ENCODE measurements at regions of chrX and their contacts with region 1.

Region 1: GRCh38 chrX:23742697-23743622 is at the start of gene ACOT9:
- DNase-seq: peak; percentile 90 to 94
- H3K4me3 ChIP-seq: peak within 1 kb of the TSS; percentile 89
- H3K4me3 Mint-ChIP-seq: peak within 1 kb of the TSS; percentile 80
- H3K27ac Mint-ChIP-seq: peak within 1 kb of the TSS; percentile 92
- H3K4me1 ChIP-seq: no peaks in the 10 kb centered on the region
- H3K4me1 Mint-ChIP-seq: peaks cover 6% of the 10 kb centered on the region
- H3K27me3 ChIP-seq: no peaks in the 10 kb centered on the region
- H3K27me3 Mint-ChIP-seq: no peaks in the 10 kb centered on the region
- CTCF ChIP-seq: no peak
- total RNA-seq, gene ACOT9: 35.1 and 40.9 TPM in 2 replicates

Region 2: DNA sequence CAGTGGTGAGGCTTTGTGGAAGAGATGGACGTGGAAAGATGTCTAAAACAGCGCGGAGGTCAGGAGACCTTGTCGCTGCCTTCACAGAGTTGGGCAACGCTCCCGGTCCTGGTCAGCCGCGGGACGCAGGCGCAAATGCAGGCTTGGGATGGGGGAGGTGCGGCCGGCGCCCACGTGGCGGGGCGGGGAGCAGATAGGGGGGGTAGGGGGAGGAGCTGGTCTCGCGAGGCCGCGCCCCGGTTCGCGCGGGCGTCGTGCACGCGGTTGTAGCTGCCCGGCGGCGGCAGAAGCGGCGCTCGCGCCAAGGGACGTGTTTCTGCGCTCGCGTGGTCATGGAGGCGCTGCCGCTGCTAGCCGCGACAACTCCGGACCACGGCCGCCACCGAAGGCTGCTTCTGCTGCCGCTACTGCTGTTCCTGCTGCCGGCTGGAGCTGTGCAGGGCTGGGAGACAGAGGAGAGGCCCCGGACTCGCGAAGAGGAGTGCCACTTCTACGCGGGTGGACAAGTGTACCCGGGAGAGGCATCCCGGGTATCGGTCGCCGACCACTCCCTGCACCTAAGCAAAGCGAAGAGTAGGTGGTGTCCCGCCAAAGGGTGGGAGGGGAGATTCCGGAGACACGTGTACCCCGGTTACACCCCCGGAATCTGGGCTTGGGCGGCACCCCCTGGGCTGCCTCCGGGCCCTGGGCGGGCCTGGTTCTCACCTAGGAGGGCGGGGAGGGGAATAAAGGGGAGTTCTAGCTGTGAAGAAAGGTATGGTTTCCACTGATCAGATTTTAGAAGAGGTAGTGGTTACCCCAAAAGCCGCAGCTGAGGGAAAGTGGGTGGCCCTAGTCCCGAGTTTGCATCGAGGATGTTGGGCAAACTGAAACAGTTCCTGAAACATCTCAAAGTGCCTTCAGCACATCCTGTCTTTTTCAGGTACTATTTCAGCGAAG is 75.5 kb before region 1 on chrX and contains the start of gene PRDX4:
- CTCF ChIA-PET with region 1: no interaction called
- POLR2A ChIA-PET with region 1: no interaction called
- intact Hi-C with region 1: loop called (anchors 2 kb)
- DNase-seq: peak; percentile 90
- H3K4me3 ChIP-seq: peak within 1 kb of the TSS; percentile 62
- H3K4me3 Mint-ChIP-seq: peak within 1 kb of the TSS; percentile 75
- H3K27ac Mint-ChIP-seq: peak within 1 kb of the TSS; percentile 73
- H3K4me1 ChIP-seq: peaks cover 5% of the 10 kb centered on the region
- H3K4me1 Mint-ChIP-seq: peaks cover 7% of the 10 kb centered on the region
- H3K27me3 ChIP-seq: no peaks in the 10 kb centered on the region
- H3K27me3 Mint-ChIP-seq: no peaks in the 10 kb centered on the region
- CTCF ChIP-seq: no peak
- total RNA-seq, gene PRDX4: 185 and 187 TPM in 2 replicates

Region 3: DNA sequence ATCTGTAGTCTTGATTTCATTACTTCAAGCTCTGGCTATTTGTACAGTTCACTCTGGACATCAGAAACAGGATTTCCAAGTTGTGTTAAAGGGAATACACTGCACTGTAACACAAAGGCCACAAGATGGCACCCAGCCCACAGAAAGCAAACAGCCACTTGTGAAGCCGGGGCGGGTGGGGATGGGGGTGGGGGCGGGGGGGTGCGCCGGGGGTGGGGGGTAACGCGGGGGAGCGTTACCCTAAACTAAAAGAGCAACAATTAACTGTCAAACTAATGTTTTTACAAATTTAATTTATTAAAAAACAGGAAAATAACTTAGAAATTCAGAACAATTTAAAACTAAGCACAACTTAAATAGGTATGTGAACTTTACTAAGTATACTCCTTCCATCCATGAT is 48.4 kb before region 1 on chrX:
- CTCF ChIA-PET with region 1: no interaction called
- POLR2A ChIA-PET with region 1: no interaction called
- intact Hi-C with region 1: loop called (anchors 5 kb)
- DNase-seq: peak; percentile 35 to 41
- H3K4me3 ChIP-seq: no peak overlapping the region
- H3K4me3 Mint-ChIP-seq: no peak overlapping the region
- H3K27ac Mint-ChIP-seq: no peak overlapping the region
- H3K4me1 ChIP-seq: no peaks in the 10 kb centered on the region
- H3K4me1 Mint-ChIP-seq: no peaks in the 10 kb centered on the region
- H3K27me3 ChIP-seq: no peaks in the 10 kb centered on the region
- H3K27me3 Mint-ChIP-seq: no peaks in the 10 kb centered on the region
- CTCF ChIP-seq: peak; percentile 45 to 54

Region 4: GRCh38 chrX:23726191-23726590 is 16.8 kb before region 1 on chrX:
- CTCF ChIA-PET with region 1: no interaction called
- POLR2A ChIA-PET with region 1: no interaction called
- intact Hi-C with region 1: no loop called
- DNase-seq: no peak
- H3K4me3 ChIP-seq: no peak overlapping the region
- H3K4me3 Mint-ChIP-seq: no peak overlapping the region
- H3K27ac Mint-ChIP-seq: no peak overlapping the region
- H3K4me1 ChIP-seq: no peaks in the 10 kb centered on the region
- H3K4me1 Mint-ChIP-seq: no peaks in the 10 kb centered on the region
- H3K27me3 ChIP-seq: no peaks in the 10 kb centered on the region
- H3K27me3 Mint-ChIP-seq: no peaks in the 10 kb centered on the region
- CTCF ChIP-seq: no peak